ENCODE measurements at regions of chr2 and their contacts with region 1.

Region 1: GRCh38 chr2:196926562-196927375 is at the start of gene PGAP1:
- DNase-seq: peak; percentile 73 to 95 (median 90)

Region 2: DNA sequence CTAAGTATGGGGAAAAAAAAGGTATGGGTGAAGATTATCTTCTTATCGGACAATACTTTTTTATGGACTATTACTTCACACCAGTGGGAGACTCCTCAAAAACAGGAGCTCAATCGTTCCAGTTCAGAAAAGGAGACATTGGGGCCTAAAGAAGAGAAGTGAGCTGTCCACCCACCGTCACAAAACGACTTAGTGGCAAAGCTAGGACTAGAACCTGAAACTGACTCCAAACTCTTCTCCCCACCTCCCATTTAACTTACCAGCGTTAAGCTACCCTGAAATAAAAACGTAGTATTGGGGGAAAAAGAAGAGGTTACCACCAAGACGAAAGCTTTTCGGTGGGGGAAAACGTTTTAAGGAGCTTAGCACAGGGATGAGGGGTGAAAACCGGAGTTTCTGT is 127.8 kb before region 1 on chr2:
- intact Hi-C with region 1: no loop called
- DNase-seq: no peak

Region 3: DNA sequence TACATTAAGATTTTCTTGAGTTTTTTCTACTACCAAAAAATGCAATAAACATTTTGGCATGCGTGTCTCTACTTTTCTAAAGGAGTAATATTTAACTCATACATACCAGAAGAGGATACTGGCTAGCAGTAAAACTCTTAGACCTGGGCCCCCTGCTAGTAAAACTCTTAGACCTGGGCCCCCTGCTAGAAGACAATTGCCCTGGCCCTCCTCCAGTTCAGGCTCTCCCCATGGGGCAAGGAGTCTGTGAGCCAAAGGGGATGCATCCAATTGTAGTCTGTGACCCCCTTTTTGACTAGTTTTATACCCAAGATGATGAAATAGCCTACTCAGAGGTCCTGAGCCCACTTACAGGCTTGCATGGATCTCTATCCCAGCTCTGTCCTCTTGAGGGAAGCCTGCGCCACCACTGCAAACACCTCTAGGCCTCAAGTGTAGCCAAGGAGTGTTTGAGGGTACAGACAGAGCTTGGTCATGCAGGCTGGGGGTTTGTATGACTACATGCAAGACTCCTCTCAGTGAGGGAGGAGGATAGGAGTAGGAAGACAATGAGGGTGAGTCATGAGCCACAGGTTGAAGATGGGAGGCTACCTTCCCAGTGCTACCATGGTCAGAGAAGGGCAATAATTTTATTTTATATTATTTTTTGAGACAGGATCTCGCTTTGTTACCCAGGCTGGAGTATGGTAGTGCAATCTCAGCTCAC is 45.0 kb after region 1 on chr2:
- intact Hi-C with region 1: no loop called
- DNase-seq: no peak

Region 4: GRCh38 chr2:196987649-196988364 is 61.0 kb after region 1 on chr2:
- intact Hi-C with region 1: loop called (anchors 10 kb)
- DNase-seq: peak in 18 of 42 donors; percentile 10 to 88 (median 50)

Region 5: GRCh38 chr2:197075759-197076337 is 149.1 kb after region 1 on chr2:
- intact Hi-C with region 1: loop called (anchors 10 kb)
- DNase-seq: no peak